Left lung (tissue), 14 donors: ENCODE measurements at regions of chr9 and their contacts with region 1.

Region 1: GRCh38 chr9:100322954-100323536 is 29.7 kb downstream of the TEX10 start:
- DNase-seq: peak in 2 of 4 donors; percentile 19 to 37
- ATAC-seq: peak; percentile 41
- H3K4me3 ChIP-seq: no peak overlapping the region
- H3K27ac ChIP-seq: no peak overlapping the region
- H3K4me1 ChIP-seq: no peaks in the 10 kb centered on the region
- H3K27me3 ChIP-seq: no peaks in the 10 kb centered on the region
- CTCF ChIP-seq: peak; percentile 5 to 51

Region 2: GRCh38 chr9:99986642-99987041 is 336.4 kb before region 1 on chr9:
- intact Hi-C with region 1: no loop called
- DNase-seq: no peak
- ATAC-seq: no peak
- H3K4me3 ChIP-seq: no peak overlapping the region
- H3K27ac ChIP-seq: no peak overlapping the region
- H3K4me1 ChIP-seq: no peaks in the 10 kb centered on the region
- H3K27me3 ChIP-seq: no peaks in the 10 kb centered on the region
- CTCF ChIP-seq: no peak

Region 3: DNA sequence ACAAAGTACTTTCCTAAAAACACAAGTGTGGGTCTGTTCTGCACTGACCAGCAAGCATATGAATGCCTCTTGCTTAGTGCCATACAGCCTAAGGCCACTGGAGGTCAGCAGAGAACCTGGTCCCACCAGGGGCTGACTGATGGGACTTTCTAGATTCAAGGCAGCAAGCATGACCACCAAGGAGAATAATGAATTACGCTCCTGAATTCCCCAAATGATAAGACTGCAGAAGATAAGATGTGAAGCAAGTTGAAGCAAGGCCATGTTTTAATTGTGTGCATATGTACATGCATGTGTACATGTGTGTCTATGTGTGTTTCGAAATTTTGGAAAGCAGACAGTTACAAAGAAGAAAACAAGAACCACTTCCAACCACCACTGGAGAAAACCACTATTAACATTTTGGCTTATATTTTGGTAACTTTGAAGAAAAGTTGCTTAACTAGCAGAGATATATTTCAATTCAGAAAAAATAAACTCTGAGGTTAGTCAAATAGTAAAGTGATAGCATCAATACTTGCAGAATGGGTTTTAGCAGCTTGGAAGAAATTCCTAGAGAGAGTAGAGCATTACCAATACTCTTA is 294.8 kb before region 1 on chr9:
- intact Hi-C with region 1: loop called in 1 of 2 experiments (anchors 10 kb)
- DNase-seq: peak; percentile 29 to 82 (median 60)
- ATAC-seq: peak; percentile 100
- H3K4me3 ChIP-seq: no peak overlapping the region
- H3K27ac ChIP-seq: no peak overlapping the region
- H3K4me1 ChIP-seq: peaks cover 0 to 22% of the 10 kb centered on the region in 2 donors
- H3K27me3 ChIP-seq: no peaks in the 10 kb centered on the region
- CTCF ChIP-seq: peak; percentile 86